ENCODE measurements at regions of chr11 and their contacts with region 1.

Region 1: GRCh38 chr11:75499449-75500190 is 26.1 kb downstream of the GDPD5 start:
- DNase-seq: peak; percentile 88
- H3K4me3 Mint-ChIP-seq: peak overlapping the region; percentile 1
- H3K27ac Mint-ChIP-seq: peak overlapping the region; percentile 8
- H3K4me1 Mint-ChIP-seq: peaks cover 28% of the 10 kb centered on the region
- H3K27me3 Mint-ChIP-seq: no peaks in the 10 kb centered on the region
- CTCF ChIP-seq: no peak

Region 2: DNA sequence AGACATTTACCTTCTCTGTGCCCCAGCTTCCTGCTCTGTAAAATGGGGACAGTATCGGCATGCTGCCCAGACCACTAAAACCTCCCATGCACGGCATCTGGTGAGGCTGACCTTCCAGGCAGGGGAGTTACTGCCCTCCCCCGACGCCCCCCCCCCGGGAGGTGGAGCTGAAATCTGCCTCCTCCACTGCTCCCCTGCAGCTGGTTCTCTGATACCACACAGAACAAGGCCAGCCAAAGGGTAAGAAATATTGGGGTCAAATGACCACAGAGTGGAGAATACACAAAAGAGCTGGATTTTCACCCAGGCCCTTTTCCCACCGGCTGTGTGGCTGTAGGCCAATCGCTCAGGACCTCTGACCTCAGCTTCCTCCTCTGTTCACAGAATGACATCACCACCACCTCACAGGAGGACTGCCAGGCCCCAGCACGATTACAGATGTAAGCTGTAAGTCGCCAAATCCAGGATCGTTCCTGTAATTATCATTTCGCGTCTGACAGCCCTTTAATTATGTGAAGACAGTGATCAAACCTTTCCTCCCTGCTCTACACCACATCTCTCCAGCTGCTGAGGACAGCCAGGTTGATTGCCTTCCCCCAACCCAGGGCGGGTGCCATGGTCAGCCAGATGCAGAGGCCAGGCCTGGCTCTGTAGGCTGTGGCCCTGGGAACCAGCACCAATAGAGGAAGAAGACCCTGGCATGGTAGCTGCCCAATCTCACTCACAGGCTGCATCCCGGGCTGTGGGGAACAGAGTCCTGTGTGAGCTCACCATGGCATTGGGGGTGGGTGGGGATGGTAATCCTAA is 30.9 kb before region 1 on chr11:
- CTCF ChIA-PET with region 1: no interaction called
- POLR2A ChIA-PET with region 1: no interaction called
- intact Hi-C with region 1: no loop called
- DNase-seq: no peak
- H3K4me3 Mint-ChIP-seq: no peak overlapping the region
- H3K27ac Mint-ChIP-seq: no peak overlapping the region
- H3K4me1 Mint-ChIP-seq: no peaks in the 10 kb centered on the region
- H3K27me3 Mint-ChIP-seq: no peaks in the 10 kb centered on the region
- CTCF ChIP-seq: no peak

Region 3: DNA sequence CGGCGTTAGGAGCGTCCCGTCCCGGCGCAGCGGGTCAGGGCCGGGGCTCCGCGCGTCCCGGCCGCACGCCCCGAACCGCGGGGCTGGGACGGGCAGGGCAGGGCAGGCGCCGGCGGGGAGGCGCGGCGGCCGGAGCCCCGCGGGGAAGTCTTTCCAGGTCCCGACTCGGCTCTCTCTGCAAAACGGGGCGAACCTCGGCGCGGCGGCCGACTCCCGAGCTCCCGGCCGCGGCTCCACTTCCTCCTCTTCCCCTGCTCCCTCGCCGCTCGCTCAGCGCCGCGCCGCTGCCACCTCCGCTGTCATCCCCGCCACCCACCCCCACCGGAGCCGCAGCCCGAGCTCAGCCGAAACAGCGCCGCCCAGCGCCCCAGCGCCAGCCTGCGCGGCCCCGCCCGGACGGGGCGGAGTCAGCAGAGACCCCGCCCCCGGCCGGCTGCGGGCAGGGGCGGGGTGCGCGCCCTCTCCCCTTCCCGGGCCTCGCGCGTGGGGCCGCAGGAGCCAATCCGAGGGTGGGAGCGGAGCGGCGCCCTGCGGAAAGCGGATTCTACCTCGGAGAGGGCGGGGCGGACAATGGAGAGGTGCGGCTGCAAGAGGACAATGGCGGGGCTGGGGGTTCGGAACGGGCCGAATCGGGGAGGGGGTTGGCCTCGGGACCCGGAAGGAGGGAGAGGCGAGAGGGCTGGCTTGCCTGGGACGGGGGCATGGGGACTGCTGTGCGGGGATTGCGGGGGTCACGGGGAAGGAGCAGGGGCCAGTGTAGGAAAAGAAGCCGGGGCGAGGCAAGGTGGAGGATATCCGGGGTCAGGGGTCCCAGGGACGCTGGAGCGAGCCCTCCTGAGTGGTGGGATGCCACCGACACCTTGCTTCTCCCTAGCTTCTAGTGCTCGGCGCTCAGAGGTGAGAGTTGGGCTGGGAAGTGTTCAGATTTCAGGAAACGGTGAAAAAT is 26.2 kb after region 1 on chr11 and contains the start of gene GDPD5:
- CTCF ChIA-PET with region 1: interaction called, 4 read pairs
- POLR2A ChIA-PET with region 1: interaction called, 3 read pairs
- intact Hi-C with region 1: loop called (anchors 2 kb)
- DNase-seq: peak; percentile 70
- H3K4me3 Mint-ChIP-seq: peak within 1 kb of the TSS; percentile 71
- H3K27ac Mint-ChIP-seq: no peak within 1 kb of the TSS
- H3K4me1 Mint-ChIP-seq: no peaks in the 10 kb centered on the region
- H3K27me3 Mint-ChIP-seq: no peaks in the 10 kb centered on the region
- CTCF ChIP-seq: peak; percentile 47
- total RNA-seq, gene GDPD5: 5.6 and 5.7 TPM in 2 replicates

Measured in MCF 10A (cell line).